Posterior cingulate gyrus (tissue), 11 donors: ENCODE measurements at regions of chr1 and their contacts with region 1.

Region 1: GRCh38 chr1:111399792-111400610 is 27.5 kb downstream of the OVGP1 start:
- DNase-seq: peak in 4 of 10 donors; percentile 29 to 56 (median 38)

Region 2: DNA sequence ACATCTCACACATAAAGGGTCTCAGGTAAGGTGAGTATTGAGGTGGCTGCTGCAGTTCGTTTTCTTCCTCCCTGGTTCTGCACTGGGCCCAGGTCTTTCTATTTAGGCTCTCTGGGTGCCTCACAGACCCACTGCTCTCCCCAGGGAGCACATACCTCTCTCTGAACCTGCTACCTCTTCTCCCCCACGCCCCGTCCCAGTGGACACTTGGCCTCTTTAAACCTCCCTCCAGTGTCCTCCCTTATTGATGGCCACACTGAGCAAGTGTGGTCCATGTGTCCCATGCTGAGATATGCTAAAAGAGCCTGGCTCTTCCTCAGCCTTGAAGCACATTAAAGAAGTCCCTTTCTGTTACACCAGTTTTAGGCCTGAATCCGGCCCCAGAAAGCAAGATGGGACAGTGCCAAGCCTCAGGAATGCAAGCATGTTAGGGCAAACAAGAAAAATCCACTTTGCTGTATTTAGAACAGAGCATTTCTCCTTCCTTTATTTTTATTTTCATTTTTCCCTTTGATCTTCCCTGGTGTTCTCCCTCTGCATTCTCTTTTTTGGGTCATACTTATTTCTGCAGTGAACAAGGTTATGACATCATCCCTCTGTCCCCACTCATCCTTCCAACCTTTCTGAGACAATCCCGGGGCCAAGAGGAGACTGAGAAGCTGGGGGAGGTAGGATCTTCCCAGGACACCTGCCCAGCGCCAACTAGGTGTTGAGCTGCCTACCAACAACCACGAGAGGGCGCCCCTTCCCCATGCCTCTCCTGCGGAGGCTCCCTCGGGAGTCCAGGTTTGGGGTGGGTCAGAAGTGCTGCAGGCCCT is 177.5 kb before region 1 on chr1:
- intact Hi-C with region 1: loop called (anchors 1 kb)
- DNase-seq: peak in 9 of 10 donors; percentile 48 to 97 (median 82)

Region 3: DNA sequence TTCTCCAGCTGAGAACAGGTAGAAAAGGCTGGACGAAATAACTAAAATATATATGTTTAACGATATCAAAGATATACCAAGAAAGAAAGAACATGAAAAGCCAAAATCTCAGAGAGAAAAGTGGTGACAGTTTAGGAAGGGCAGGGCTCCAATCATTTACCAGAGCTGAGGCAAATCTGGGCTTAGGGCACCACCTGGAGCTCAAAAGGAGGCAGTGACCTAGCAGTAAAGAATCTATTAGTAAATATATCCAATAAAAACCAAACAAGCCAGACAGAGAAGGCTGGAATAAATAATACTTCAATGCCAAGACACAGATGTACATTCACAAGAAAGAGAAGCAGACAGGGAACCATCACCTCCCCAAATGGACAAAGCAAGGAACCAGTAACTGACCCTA is 65.8 kb before region 1 on chr1:
- intact Hi-C with region 1: no loop called
- DNase-seq: peak in 2 of 10 donors; percentile 23 to 26

Region 4: GRCh38 chr1:111538343-111539025 is 138.5 kb after region 1 on chr1:
- intact Hi-C with region 1: no loop called
- DNase-seq: no peak